ENCODE measurements at regions of chr11 and their contacts with region 1.

Region 1: GRCh38 chr11:35511666-35512065 is 13.8 kb downstream of the PAMR1 start:
- DNase-seq: peak; percentile 95
- H3K4me3 ChIP-seq: peak overlapping the region; percentile 22; the same call in 1 of the 2 replicates
- H3K27ac ChIP-seq: peak overlapping the region; percentile 77
- H3K4me1 ChIP-seq: peaks cover 43% of the 10 kb centered on the region
- H3K27me3 ChIP-seq: no peaks in the 10 kb centered on the region

Region 2: DNA sequence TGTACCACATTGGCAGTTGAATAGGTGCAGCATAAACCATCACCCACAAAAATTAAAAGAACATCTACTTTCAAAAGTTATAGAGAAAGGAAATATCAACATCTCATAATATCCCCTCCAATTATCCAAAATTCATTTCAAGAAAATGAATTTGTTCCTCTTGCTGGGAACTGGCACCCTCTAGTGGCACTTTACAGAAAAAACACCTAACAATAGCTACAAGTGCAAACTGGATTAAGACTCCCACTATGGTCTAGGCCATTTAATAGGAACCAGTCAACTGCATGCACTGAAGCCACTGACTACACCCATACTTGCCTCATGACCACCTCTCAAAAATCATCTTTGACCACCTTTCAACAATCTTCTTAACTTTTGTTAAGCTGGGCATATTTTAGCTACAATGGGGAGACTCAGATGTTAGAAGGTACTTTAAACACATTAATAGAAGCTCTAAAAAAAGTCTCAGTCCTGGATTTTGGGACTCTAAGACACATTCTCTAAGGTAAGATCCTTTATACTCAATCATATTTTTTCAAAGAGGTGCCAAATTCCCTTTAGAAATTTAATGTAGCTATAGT is 981.1 kb after region 1 on chr11:
- in situ Hi-C with region 1: loop called (anchors 25 kb)
- DNase-seq: peak; percentile 63
- H3K4me3 ChIP-seq: no peak overlapping the region
- H3K27ac ChIP-seq: no peak overlapping the region
- H3K4me1 ChIP-seq: peaks cover 2% of the 10 kb centered on the region
- H3K27me3 ChIP-seq: no peaks in the 10 kb centered on the region

Measured in GM23248 (cell line).